CD8-positive, alpha-beta T cell (primary cell): ENCODE measurements at regions of chr1 and their contacts with region 1.

Region 1: DNA sequence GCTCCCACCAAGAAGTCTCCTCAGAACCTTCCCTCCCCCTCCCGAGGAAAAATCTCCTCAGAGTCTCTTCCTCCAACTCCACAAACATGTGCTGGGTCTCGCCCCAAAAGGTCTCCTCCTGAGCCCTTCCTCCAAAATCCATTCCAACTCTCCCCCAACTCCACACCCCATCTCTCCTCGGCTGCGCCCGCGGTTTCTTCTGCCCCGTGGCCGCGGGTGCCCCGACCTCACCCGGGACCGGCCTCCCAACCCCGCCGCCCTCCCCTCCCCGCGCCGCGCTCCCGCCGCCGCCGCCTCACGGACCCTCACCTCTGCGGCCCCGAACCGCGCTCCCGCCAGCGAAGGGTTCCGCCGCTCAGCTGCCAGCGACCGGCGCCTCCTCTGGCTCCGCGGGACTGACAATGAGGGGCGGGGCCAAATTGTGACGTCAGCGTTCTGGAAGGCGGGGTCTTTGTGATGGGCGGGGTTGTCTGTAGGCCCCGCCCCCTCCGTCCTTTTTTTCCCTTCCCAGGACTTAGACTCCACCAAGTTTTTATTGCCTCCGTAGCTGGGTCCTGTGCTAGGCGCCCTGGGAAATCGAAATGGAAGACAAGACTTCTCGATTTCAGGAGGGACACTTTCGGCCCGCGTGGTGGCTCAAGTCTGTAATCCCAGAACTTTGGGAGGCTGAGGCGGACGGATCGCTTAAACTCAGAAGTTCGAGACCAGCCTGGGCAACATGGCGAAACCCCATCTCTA is at the start of gene LUZP1:
- DNase-seq: peak; percentile 67 to 94 (median 87)
- ATAC-seq: peak; percentile 90
- H3K4me3 ChIP-seq: peak within 1 kb of the TSS; percentile 85 to 93
- H3K4me3 Mint-ChIP-seq: peak within 1 kb of the TSS; percentile 94
- H3K27ac ChIP-seq: peak within 1 kb of the TSS; percentile 75
- H3K27ac Mint-ChIP-seq: peak within 1 kb of the TSS; percentile 86
- H3K4me1 ChIP-seq: peaks cover 20% of the 10 kb centered on the region
- H3K4me1 Mint-ChIP-seq: peaks cover 42% of the 10 kb centered on the region
- H3K27me3 ChIP-seq: no peaks in the 10 kb centered on the region
- H3K27me3 Mint-ChIP-seq: no peaks in the 10 kb centered on the region
- CTCF ChIP-seq: no peak
- total RNA-seq, gene LUZP1: 51.0 to 52.5 TPM

Region 2: GRCh38 chr1:23019094-23019862 is 149.3 kb before region 1 on chr1 and contains the start of gene KDM1A:
- CTCF ChIA-PET with region 1: no interaction called
- POLR2A ChIA-PET with region 1: no interaction called
- intact Hi-C with region 1: loop called (anchors 2 to 5 kb)
- DNase-seq: peak; percentile 89 to 98 (median 95)
- ATAC-seq: peak; percentile 98
- H3K4me3 ChIP-seq: peak within 1 kb of the TSS; percentile 57 to 90
- H3K4me3 Mint-ChIP-seq: peak within 1 kb of the TSS; percentile 99
- H3K27ac ChIP-seq: peak within 1 kb of the TSS; percentile 41 to 69
- H3K27ac Mint-ChIP-seq: peak within 1 kb of the TSS; percentile 93
- H3K4me1 ChIP-seq: peaks cover 14% of the 10 kb centered on the region
- H3K4me1 Mint-ChIP-seq: peaks cover 46% of the 10 kb centered on the region
- H3K27me3 ChIP-seq: no peaks in the 10 kb centered on the region
- H3K27me3 Mint-ChIP-seq: no peaks in the 10 kb centered on the region
- CTCF ChIP-seq: no peak
- total RNA-seq, gene KDM1A: 42.2 to 46.2 TPM

Region 3: GRCh38 chr1:23081376-23081775 is 87.2 kb before region 1 on chr1:
- CTCF ChIA-PET with region 1: no interaction called
- POLR2A ChIA-PET with region 1: no interaction called
- intact Hi-C with region 1: no loop called
- DNase-seq: peak in 1 of 9 experiments; percentile 17
- ATAC-seq: peak; percentile 63
- H3K4me3 ChIP-seq: no peak overlapping the region
- H3K4me3 Mint-ChIP-seq: no peak overlapping the region
- H3K27ac ChIP-seq: no peak overlapping the region
- H3K27ac Mint-ChIP-seq: no peak overlapping the region
- H3K4me1 ChIP-seq: no peaks in the 10 kb centered on the region
- H3K4me1 Mint-ChIP-seq: no peaks in the 10 kb centered on the region
- H3K27me3 ChIP-seq: no peaks in the 10 kb centered on the region
- H3K27me3 Mint-ChIP-seq: no peaks in the 10 kb centered on the region
- CTCF ChIP-seq: no peak

Region 4: DNA sequence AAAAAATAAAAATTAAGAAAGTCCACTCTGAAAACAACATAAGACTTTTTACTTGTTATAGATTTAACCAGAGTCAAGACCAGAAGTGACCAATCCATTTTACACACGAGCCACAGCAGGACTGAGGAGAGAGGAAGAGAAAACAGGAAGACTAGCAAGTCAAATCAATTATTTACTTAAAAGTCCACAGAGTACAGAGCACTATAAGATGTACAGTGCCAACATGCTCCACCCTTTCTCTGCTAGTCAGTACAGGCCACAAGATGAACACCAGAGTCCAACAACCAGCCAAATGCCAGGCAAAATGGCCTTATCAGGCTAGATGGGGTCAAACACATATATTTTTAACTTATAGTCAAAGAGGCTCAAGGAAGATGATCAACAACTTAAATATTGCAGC is 19.5 kb before region 1 on chr1:
- CTCF ChIA-PET with region 1: no interaction called
- POLR2A ChIA-PET with region 1: no interaction called
- intact Hi-C with region 1: loop called in 1 of 2 experiments (anchors 1 kb)
- DNase-seq: no peak
- ATAC-seq: no peak
- H3K4me3 ChIP-seq: no peak overlapping the region
- H3K4me3 Mint-ChIP-seq: no peak overlapping the region
- H3K27ac ChIP-seq: no peak overlapping the region
- H3K27ac Mint-ChIP-seq: no peak overlapping the region
- H3K4me1 ChIP-seq: peaks cover 14% of the 10 kb centered on the region
- H3K4me1 Mint-ChIP-seq: peaks cover 42% of the 10 kb centered on the region
- H3K27me3 ChIP-seq: no peaks in the 10 kb centered on the region
- H3K27me3 Mint-ChIP-seq: no peaks in the 10 kb centered on the region
- CTCF ChIP-seq: no peak

Region 5: GRCh38 chr1:23436520-23437354 is 268.1 kb after region 1 on chr1:
- CTCF ChIA-PET with region 1: no interaction called
- POLR2A ChIA-PET with region 1: no interaction called
- intact Hi-C with region 1: no loop called
- DNase-seq: peak in 6 of 9 experiments; percentile 38 to 56 (median 54)
- ATAC-seq: peak; percentile 92
- H3K4me3 ChIP-seq: no peak overlapping the region
- H3K4me3 Mint-ChIP-seq: peak overlapping the region; percentile 47
- H3K27ac ChIP-seq: no peak overlapping the region
- H3K27ac Mint-ChIP-seq: no peak overlapping the region
- H3K4me1 ChIP-seq: no peaks in the 10 kb centered on the region
- H3K4me1 Mint-ChIP-seq: peaks cover 3% of the 10 kb centered on the region
- H3K27me3 ChIP-seq: no peaks in the 10 kb centered on the region
- H3K27me3 Mint-ChIP-seq: no peaks in the 10 kb centered on the region
- CTCF ChIP-seq: no peak